Activated T-helper 1 cell treated with anti-CD3 and anti-CD28 coated beads, Interleukin-12 subunit alpha, Interleukin-12 subunit beta, Interleukin-2, Interleukin-4 antibody, amounts not matched to agents 30 ng/mL and 10 ng/mL and 1 ng/mL, durations not matched to agents 14 hours and 24 hours and 36 hours (primary cell): ENCODE measurements at regions of chr1 and their contacts with region 1.

Region 1: DNA sequence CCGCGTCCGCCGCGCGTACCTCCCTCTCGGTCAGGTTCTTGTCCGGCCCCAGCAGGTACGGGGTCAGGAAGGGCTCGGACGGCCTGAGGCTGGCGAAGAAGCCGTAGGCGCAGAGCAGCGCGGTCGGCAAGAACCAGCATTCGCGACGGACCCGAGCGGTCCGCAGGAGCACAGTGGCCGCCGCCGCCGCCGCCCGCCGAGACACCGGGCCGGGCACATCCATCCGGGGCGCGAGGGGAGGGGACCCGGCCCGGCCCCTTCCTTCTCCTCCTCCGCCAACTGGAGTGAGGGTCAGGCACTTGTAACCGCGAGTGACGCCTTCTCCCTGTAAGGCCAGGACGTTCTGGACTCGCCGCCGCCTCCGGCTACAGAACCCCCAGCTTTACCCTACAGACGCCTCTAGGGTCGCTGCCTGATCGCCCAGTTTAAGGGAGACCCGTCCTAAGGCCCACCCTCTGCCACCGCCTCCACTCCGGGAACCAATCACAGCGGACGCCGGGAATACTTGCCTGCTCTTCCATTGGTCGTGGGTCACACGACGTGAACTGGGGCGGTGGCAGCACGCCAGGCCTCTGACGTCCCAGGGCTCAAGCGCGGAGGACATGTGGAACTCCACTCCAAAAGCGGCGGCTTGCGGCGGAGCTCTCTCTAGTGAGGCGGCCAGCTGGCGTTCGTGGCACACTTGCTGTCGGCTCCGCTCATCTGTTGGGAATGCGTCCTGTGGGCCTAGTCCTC is at the start of gene SLC19A2:
- DNase-seq: peak; percentile 93
- H3K4me3 Mint-ChIP-seq: peak within 1 kb of the TSS; percentile 94
- H3K27ac Mint-ChIP-seq: peak within 1 kb of the TSS; percentile 89
- H3K4me1 Mint-ChIP-seq: peaks cover 67% of the 10 kb centered on the region
- H3K27me3 Mint-ChIP-seq: no peaks in the 10 kb centered on the region
- total RNA-seq, gene SLC19A2: 12.8 and 14.0 TPM in 2 replicates

Region 2: GRCh38 chr1:168342572-168343280 is 1143.0 kb before region 1 on chr1:
- intact Hi-C with region 1: loop called (anchors 10 kb)
- DNase-seq: peak; percentile 79
- H3K4me3 Mint-ChIP-seq: no peak overlapping the region
- H3K27ac Mint-ChIP-seq: peak overlapping the region; percentile 14
- H3K4me1 Mint-ChIP-seq: peaks cover 64% of the 10 kb centered on the region
- H3K27me3 Mint-ChIP-seq: peaks cover 7% of the 10 kb centered on the region

Region 3: DNA sequence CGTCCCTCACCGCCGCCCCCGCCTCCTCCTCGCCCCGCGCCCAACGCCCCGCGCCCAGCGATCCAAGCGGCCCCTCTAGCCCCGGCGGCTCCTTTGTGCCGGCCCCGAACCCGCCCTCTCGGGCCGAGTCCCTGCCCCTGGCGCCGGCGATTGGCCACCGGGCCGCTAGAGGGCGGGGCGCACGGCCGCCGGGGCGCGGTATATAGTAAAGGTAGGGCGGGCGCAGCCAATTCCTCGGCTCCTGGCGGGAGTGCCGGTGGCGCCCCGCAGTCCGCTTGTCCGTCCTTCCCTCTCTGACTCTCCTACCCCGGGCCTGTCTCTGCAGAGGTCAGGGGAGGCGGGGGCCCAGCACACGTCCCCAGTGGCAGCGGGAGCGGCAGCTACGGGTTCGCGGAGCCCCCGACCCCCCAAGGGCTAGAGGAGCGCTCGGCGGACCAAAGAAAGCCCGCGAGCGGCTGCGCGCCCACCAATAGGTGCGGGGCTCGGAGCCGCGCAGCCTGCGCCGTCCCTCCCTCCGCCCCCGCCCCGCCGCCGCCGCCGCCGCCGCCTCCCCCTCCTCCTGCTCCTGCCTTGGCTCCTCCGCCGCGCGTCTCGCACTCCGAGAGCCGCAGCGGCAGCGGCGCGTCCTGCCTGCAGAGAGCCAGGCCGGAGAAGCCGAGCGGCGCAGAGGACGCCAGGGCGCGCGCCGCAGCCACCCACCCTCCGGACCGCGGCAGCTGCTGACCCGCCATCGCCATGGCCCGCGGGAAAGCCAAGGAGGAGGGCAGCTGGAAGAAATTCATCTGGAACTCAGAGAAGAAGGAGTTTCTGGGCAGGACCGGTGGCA is 379.4 kb before region 1 on chr1 and contains the start of gene ATP1B1:
- intact Hi-C with region 1: loop called (anchors 5 kb)
- DNase-seq: peak; percentile 81
- H3K4me3 Mint-ChIP-seq: peak within 1 kb of the TSS; percentile 89
- H3K27ac Mint-ChIP-seq: peak within 1 kb of the TSS; percentile 80
- H3K4me1 Mint-ChIP-seq: peaks cover 51% of the 10 kb centered on the region
- H3K27me3 Mint-ChIP-seq: peaks cover 5% of the 10 kb centered on the region
- total RNA-seq, gene ATP1B1: 12.3 TPM in 2 replicates

Region 4: GRCh38 chr1:169466259-169467230 is 19.2 kb before region 1 on chr1:
- intact Hi-C with region 1: loop called (anchors 2 kb)
- DNase-seq: no peak
- H3K4me3 Mint-ChIP-seq: no peak overlapping the region
- H3K27ac Mint-ChIP-seq: no peak overlapping the region
- H3K4me1 Mint-ChIP-seq: peaks cover 1% of the 10 kb centered on the region
- H3K27me3 Mint-ChIP-seq: no peaks in the 10 kb centered on the region

Region 5: DNA sequence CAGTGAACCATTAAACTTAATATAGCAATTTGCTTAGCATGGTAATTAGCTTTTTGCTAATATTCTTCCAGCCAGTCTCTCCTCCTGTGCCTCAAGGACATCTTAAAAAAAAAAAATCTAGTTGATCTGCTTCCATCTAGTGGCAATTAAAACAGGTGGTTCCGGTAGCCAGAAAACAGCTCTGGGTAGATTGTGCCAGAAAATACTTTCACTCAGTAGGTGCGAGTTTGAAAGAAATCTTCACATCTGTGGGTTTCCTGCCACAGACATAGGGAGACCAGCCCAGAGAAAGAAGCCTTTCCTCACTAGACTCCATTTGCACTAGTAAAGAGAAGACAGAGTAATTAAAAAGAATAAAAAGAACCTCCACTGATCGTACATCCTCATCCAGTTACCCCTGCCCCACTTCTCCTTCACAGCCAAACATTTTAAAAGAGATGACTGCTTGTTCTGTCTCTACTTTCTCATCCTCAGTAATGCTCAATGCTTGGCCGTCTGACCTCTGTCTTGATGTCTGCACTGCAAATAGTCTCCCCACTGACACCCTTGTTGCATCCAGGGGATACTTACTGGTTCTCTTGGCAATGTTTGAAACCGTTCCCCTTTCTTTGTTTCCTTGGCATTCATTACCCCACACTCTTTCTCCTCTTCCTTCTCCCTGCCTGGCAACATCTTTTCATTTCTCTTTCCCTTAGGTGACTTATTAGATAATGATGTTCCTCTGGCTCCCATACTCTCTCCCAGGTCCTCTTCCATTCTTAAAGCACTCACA is 208.8 kb after region 1 on chr1:
- intact Hi-C with region 1: loop called (anchors 5 kb)
- DNase-seq: peak; percentile 56
- H3K4me3 Mint-ChIP-seq: peak overlapping the region; percentile 28
- H3K27ac Mint-ChIP-seq: peak overlapping the region; percentile 90
- H3K4me1 Mint-ChIP-seq: peaks cover 96% of the 10 kb centered on the region
- H3K27me3 Mint-ChIP-seq: no peaks in the 10 kb centered on the region

Region 6: GRCh38 chr1:169788402-169788801 is 302.7 kb after region 1 on chr1:
- intact Hi-C with region 1: no loop called
- DNase-seq: no peak
- H3K4me3 Mint-ChIP-seq: no peak overlapping the region
- H3K27ac Mint-ChIP-seq: no peak overlapping the region
- H3K4me1 Mint-ChIP-seq: peaks cover 19% of the 10 kb centered on the region
- H3K27me3 Mint-ChIP-seq: peaks cover 24% of the 10 kb centered on the region

Region 7: DNA sequence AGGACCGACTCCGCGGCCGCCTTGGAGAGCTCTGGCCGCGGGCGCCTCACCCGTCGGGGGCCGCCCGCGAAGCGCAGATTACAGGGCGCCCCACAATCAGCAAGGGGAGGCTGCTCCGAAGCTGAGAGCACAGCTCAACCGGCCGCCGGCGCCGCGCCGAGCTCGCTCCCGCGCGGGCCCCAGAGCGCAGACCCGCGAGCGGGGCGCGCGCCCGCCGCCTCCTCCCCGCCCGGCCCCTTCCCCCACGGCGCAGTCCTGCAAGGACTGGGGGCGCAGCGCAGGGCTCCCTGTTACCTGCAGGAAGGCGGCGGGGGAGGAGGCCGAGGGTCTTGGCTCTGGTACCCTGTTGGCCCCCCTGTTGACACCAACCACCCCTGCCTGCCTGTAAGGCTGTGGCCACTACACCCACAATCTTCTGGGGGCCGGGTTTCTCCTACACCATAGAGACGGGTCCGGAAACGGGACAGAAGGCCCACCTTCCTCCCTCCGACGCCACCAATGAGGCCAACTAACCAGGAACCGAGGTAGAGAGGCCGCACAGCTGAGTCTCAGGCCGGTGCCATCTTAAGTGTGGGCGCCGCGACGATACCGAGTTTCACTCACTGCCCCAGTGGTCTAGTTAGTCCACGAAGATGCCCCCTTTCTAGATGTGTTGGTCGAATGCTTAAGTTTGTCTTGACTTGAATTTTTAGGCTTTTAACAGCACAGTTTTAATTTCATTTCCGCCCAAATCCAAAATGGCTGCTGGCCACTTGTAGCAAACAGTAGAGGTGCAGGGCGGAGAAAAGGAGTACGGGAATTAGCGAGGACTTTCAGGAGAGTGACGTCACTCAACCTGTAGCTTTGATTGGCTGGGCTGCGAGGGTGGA is 408.0 kb after region 1 on chr1 and contains the start of gene SCYL3:
- intact Hi-C with region 1: loop called (anchors 1 kb)
- DNase-seq: peak; percentile 86
- H3K4me3 Mint-ChIP-seq: peak within 1 kb of the TSS; percentile 86
- H3K27ac Mint-ChIP-seq: peak within 1 kb of the TSS; percentile 100
- H3K4me1 Mint-ChIP-seq: peaks cover 51% of the 10 kb centered on the region
- H3K27me3 Mint-ChIP-seq: peaks cover 12% of the 10 kb centered on the region
- total RNA-seq, gene SCYL3: 11.8 and 12.3 TPM in 2 replicates